ENCODE measurements at regions of chr19 and their contacts with region 1.

Region 1: GRCh38 chr19:5977785-5978605 is at the start of gene RANBP3:
- DNase-seq: peak; percentile 100
- ATAC-seq: peak; percentile 91
- H3K4me3 ChIP-seq: peak within 1 kb of the TSS; percentile 84
- H3K27ac ChIP-seq: peak within 1 kb of the TSS; percentile 54
- H3K4me1 ChIP-seq: peaks cover 48% of the 10 kb centered on the region
- H3K27me3 ChIP-seq: no peaks in the 10 kb centered on the region
- CTCF ChIP-seq: no peak
- total RNA-seq, gene RANBP3: 114 and 153 TPM in 2 replicates

Region 2: DNA sequence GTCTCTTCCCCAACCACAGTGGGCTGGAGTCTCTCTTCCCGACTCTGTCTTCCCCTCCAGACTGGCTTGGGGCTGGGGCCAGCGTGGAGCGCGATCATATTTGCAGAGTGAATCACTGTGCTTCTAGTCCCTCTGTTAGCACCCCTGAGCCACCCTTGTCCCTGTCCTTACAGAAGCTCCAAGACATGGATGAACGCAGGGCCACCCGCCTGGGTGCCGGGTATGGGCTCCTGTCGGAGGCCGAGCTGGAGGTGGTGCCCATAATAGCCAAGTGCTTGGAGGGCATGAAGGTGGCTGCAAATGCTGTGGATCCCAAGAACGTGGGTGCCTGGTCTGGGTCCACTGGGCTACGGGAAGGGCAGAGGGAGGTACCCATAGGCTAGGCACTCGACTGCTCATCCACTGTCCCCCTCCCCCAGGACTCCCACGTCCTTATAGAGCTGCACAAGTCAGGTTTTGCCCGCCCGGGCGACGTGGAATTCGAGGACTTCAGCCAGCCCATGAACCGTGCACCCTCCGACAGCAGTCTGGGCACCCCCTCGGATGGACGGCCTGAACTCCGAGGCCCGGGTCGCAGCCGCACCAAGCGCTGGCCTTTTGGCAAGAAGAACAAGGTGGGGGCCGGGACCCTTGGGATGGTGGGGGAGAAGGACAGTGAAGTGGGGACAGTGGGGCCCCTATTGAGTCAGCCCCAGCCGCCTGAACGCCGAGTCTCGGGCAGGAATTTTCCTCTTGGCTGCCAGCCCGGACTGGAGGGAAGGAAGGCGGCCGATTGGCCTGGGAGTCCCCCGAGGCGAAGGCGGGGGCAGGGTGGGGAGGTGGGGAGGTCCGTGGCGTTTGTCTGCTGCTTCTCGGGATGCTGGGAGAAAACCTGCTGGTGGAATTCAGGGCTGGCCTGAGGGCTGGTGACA is 766.6 kb after region 1 on chr19:
- CTCF ChIA-PET with region 1: no interaction called
- POLR2A ChIA-PET with region 1: no interaction called
- intact Hi-C with region 1: loop called (anchors 5 kb)
- DNase-seq: peak; percentile 96
- ATAC-seq: peak; percentile 71
- H3K4me3 ChIP-seq: peak overlapping the region; percentile 46
- H3K27ac ChIP-seq: peak overlapping the region; percentile 85
- H3K4me1 ChIP-seq: peaks cover 37% of the 10 kb centered on the region
- H3K27me3 ChIP-seq: no peaks in the 10 kb centered on the region
- CTCF ChIP-seq: no peak